Right lobe of liver (tissue), 6 donors: ENCODE measurements at regions of chr4 and their contacts with region 1.

Region 1: DNA sequence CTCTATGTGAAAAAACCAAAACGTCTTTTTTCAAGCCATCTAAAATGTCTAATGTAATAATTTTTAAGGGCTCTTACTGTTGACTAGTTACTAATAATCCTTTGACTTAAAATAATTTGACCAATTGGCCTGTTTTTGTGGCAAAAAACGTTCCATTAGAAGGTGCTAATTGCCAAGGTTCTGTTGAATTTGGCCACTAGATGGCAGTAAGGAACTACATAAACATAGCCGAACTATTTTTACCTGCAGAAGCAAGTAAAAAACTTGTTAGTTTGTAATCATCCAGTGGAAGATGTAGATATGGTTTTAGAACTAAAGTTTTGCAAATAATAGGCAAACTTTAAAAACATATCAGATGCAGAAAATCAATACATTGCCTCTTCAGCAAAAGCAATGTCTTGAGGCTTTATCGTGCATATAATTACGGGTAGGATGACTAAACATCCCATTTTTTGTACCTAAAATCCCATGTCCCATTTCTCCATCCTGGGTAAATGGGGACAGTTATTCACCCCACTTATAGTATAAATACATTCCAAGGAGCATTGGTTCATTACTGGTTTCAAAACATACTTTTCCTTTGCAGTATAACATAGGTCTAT is 57.6 kb downstream of the PROM1 start:
- DNase-seq: no peak
- ATAC-seq: peak; percentile 74 to 81 (median 76)
- H3K4me3 ChIP-seq: no peak overlapping the region
- H3K27ac ChIP-seq: no peak overlapping the region
- H3K4me1 ChIP-seq: peaks cover 0 to 16% (median 8%) of the 10 kb centered on the region in 4 donors
- H3K27me3 ChIP-seq: no peaks in the 10 kb centered on the region
- CTCF ChIP-seq: peak; percentile 77 to 91 (median 86)
- POLR2A ChIP-seq: no peak

Region 2: DNA sequence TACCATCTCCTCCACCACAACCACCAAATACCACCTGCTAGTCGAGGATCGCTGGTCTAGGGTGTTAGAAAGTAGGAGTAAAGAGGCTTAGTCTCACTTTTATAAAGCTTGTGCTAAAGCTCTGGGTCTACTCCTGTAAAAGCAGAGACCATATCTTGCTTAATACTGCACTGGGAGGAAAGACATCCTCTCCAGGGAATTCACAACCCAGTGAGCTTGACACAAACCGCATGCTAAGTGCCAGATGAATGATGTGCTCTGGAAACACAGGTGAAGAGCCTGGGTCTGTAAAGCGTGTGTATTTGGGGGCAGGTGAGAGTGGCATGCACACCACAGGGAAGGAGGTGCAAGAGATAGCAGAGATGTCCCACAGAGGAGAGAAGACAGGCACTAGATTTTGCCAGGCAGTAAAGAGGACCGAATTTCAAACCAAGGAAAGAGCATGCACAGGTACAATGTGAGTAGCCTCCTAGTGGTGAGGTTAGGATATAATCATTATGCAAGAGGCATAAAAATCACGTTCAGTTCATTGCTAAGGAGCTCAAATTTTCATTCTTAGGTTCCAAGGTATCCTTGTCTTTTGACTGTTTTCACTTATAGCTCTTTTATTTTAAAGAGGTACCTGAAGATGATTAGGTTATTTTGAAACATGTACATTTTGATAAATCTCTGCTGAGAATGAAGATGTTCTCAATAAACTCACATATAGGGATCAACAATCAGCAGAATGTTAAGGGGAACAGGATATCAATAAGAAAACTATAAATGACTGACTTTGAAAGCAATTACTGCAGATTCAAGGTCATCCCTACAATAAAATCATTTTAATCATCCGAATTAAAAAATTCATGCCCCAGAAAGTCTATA is 179.3 kb after region 1 on chr4:
- intact Hi-C with region 1: loop called in 1 of 2 experiments (anchors 10 kb)
- DNase-seq: no peak
- ATAC-seq: peak; percentile 70 to 81 (median 78)
- H3K4me3 ChIP-seq: no peak overlapping the region
- H3K27ac ChIP-seq: no peak overlapping the region
- H3K4me1 ChIP-seq: peaks cover 0 to 5% (median 0%) of the 10 kb centered on the region in 4 donors
- H3K27me3 ChIP-seq: no peaks in the 10 kb centered on the region
- CTCF ChIP-seq: peak; percentile 45 to 63 (median 54)
- POLR2A ChIP-seq: no peak